ENCODE measurements at regions of chr2 and their contacts with region 1.

Region 1: GRCh38 chr2:74958274-74959105 is at the start of gene POLE4:
- DNase-seq: peak; percentile 95
- ATAC-seq: peak; percentile 92
- H3K4me3 Mint-ChIP-seq: peak within 1 kb of the TSS; percentile 88
- H3K27ac Mint-ChIP-seq: peak within 1 kb of the TSS; percentile 94
- H3K4me1 Mint-ChIP-seq: peaks cover 72% of the 10 kb centered on the region
- H3K27me3 Mint-ChIP-seq: no peaks in the 10 kb centered on the region
- CTCF ChIP-seq: no peak
- total RNA-seq, gene POLE4: 61.5 and 73.7 TPM in 2 replicates

Region 2: DNA sequence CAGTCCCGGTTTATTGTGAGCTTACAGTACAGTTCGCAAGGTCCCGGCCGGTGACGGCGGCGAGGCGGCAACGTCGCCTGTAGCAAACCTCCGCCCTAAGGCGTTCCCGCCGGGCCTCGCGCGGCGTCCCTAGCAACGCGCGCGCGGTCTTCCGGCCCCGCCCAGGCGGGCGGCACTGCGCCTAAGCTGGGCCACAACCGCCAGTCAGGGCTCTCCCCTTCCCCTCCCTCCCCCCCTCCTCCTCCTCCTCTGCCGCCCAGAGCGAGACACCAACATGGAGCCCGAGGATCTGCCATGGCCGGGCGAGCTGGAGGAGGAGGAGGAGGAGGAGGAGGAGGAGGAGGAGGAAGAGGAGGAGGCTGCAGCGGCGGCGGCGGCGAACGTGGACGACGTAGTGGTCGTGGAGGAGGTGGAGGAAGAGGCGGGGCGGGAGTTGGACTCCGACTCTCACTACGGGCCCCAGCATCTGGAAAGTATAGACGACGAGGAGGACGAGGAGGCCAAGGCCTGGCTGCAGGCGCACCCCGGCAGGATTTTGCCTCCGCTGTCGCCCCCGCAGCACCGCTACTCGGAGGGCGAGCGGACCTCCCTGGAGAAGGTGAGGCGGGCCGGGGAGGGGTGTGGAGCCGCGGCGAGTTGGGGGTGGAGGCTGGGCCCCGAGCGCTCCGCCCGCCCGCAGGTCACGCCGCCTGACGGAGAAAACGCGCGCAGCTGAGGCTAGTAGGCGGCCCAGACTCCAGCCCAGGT is 1572.7 kb before region 1 on chr2 and contains the start of gene ALMS1:
- CTCF ChIA-PET with region 1: no interaction called
- POLR2A ChIA-PET with region 1: no interaction called
- intact Hi-C with region 1: loop called (anchors 5 kb)
- DNase-seq: peak; percentile 85
- ATAC-seq: peak; percentile 85
- H3K4me3 Mint-ChIP-seq: peak within 1 kb of the TSS; percentile 90
- H3K27ac Mint-ChIP-seq: peak within 1 kb of the TSS; percentile 89
- H3K4me1 Mint-ChIP-seq: peaks cover 19% of the 10 kb centered on the region
- H3K27me3 Mint-ChIP-seq: peaks cover 3% of the 10 kb centered on the region
- CTCF ChIP-seq: no peak
- total RNA-seq, gene ALMS1: 17.8 and 20.1 TPM in 2 replicates

Region 3: DNA sequence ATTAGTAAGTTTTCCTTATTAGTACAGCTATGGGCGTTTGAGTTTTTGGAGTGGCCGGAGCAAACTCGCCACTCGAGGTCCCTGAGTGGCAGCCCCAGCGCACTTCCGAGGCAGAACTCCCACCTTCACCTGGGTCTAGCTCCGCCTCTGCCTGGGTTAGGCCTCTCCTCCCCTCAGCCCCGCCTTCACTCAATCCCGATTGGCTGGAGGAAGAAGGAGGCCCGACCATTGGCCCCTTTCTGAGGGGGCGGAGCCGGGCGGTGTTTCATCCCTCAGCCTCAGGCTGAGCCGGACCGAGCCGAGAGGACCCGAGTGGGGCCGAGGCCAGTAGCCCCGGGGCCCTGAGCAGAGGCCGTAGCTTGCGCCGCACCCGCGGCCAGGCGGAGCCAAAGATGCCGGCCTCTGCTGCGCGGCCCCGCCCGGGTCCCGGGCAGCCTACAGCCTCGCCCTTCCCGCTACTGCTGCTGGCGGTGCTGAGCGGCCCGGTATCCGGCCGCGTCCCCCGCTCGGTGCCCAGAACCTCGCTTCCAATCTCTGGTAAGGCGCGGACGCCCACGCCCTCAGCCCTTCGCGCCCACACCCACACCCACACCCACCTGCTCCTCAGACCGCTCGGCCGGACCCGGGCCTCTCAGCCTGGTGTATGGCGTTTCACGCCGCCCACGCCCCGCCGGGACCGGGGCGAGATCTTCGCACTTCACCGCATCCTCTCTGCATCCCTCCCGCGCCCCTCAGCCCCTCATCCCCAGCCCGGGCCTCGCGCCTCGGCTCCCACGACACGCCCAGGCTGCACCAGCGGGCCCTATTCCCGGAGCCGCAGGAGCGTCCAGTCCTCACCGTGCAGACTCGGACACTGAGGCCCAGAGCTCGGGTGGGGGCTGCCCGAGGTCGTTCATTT is 304.3 kb before region 1 on chr2 and contains the start of gene SEMA4F:
- CTCF ChIA-PET with region 1: no interaction called
- POLR2A ChIA-PET with region 1: no interaction called
- intact Hi-C with region 1: loop called (anchors 2 kb)
- DNase-seq: peak; percentile 92
- ATAC-seq: peak; percentile 99
- H3K4me3 Mint-ChIP-seq: peak within 1 kb of the TSS; percentile 91
- H3K27ac Mint-ChIP-seq: peak within 1 kb of the TSS; percentile 82
- H3K4me1 Mint-ChIP-seq: peaks cover 16% of the 10 kb centered on the region
- H3K27me3 Mint-ChIP-seq: peaks cover 9% of the 10 kb centered on the region
- CTCF ChIP-seq: no peak
- total RNA-seq, gene SEMA4F: 10.2 and 11.6 TPM in 2 replicates

Region 4: GRCh38 chr2:74919827-74920226 is 38.7 kb before region 1 on chr2:
- CTCF ChIA-PET with region 1: no interaction called
- POLR2A ChIA-PET with region 1: no interaction called
- intact Hi-C with region 1: loop called (anchors 1 kb)
- DNase-seq: peak; percentile 72
- ATAC-seq: peak; percentile 88
- H3K4me3 Mint-ChIP-seq: peak overlapping the region; percentile 42
- H3K27ac Mint-ChIP-seq: no peak overlapping the region
- H3K4me1 Mint-ChIP-seq: peaks cover 14% of the 10 kb centered on the region
- H3K27me3 Mint-ChIP-seq: peaks cover 10% of the 10 kb centered on the region
- CTCF ChIP-seq: peak; percentile 57

Region 5: GRCh38 chr2:75221862-75222261 is 263.4 kb after region 1 on chr2:
- CTCF ChIA-PET with region 1: no interaction called
- POLR2A ChIA-PET with region 1: no interaction called
- intact Hi-C with region 1: no loop called
- DNase-seq: no peak
- ATAC-seq: no peak
- H3K4me3 Mint-ChIP-seq: no peak overlapping the region
- H3K27ac Mint-ChIP-seq: no peak overlapping the region
- H3K4me1 Mint-ChIP-seq: no peaks in the 10 kb centered on the region
- H3K27me3 Mint-ChIP-seq: peaks cover 15% of the 10 kb centered on the region
- CTCF ChIP-seq: no peak

Region 6: GRCh38 chr2:75432761-75433361 is 474.4 kb after region 1 on chr2:
- CTCF ChIA-PET with region 1: no interaction called
- POLR2A ChIA-PET with region 1: no interaction called
- intact Hi-C with region 1: loop called (anchors 5 kb)
- DNase-seq: peak; percentile 24
- ATAC-seq: peak; percentile 69
- H3K4me3 Mint-ChIP-seq: peak overlapping the region; percentile 60
- H3K27ac Mint-ChIP-seq: peak overlapping the region; percentile 83
- H3K4me1 Mint-ChIP-seq: peaks cover 57% of the 10 kb centered on the region
- H3K27me3 Mint-ChIP-seq: no peaks in the 10 kb centered on the region
- CTCF ChIP-seq: no peak

Region 7: GRCh38 chr2:75710577-75711253 is 752.2 kb after region 1 on chr2 and contains the start of gene GCFC2:
- CTCF ChIA-PET with region 1: no interaction called
- POLR2A ChIA-PET with region 1: no interaction called
- intact Hi-C with region 1: loop called (anchors 5 kb)
- DNase-seq: peak; percentile 82
- ATAC-seq: peak; percentile 90
- H3K4me3 Mint-ChIP-seq: peak within 1 kb of the TSS; percentile 89
- H3K27ac Mint-ChIP-seq: peak within 1 kb of the TSS; percentile 95
- H3K4me1 Mint-ChIP-seq: peaks cover 21% of the 10 kb centered on the region
- H3K27me3 Mint-ChIP-seq: peaks cover 2% of the 10 kb centered on the region
- CTCF ChIP-seq: no peak
- total RNA-seq, gene GCFC2: 26.2 and 27.5 TPM in 2 replicates